Naive thymus-derived CD4-positive, alpha-beta T cell (primary cell): ENCODE measurements at regions of chr6 and their contacts with region 1.

Region 1: DNA sequence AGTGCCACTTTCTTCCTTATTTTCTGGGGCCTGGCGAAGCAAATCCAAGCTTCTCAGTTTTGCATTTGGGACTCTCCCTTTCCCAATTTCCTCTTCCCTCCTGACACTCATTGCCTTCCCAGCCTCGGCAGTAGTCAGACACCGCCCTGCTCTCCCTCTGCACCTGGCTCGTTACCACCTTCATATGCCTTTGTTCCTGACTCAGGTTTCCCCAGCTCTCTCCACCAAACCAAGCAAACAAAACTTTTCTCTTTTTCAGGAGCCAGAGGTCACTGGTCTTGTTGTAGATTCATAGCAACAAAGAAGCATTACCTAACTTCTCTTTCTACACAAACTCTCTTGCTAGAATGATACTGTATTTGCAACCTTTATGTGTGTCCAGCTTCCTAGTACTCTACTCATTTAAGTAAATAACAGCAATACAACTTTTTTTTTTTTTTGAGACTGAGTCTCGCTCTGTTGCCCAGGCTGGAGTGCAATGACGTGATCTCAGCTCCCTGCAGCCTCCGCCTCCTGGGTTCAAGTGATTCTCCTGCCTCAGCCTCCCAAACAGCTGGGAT is 9.0 kb upstream of the ZC3H12D start:
- DNase-seq: no peak
- ATAC-seq: no peak
- H3K4me3 ChIP-seq: no peak overlapping the region
- H3K4me3 Mint-ChIP-seq: peak overlapping the region in 5 of 10 donors; percentile 1 to 75 (median 48)
- H3K27ac ChIP-seq: peak overlapping the region; percentile 94
- H3K27ac Mint-ChIP-seq: peak overlapping the region; percentile 84 to 100 (median 92)
- H3K4me1 ChIP-seq: peaks cover 16 to 48% of the 10 kb centered on the region in 2 donors
- H3K4me1 Mint-ChIP-seq: peaks cover 30 to 89% (median 58%) of the 10 kb centered on the region in 7 donors
- H3K27me3 ChIP-seq: no peaks in the 10 kb centered on the region
- H3K27me3 Mint-ChIP-seq: no peaks in the 10 kb centered on the region

Region 2: DNA sequence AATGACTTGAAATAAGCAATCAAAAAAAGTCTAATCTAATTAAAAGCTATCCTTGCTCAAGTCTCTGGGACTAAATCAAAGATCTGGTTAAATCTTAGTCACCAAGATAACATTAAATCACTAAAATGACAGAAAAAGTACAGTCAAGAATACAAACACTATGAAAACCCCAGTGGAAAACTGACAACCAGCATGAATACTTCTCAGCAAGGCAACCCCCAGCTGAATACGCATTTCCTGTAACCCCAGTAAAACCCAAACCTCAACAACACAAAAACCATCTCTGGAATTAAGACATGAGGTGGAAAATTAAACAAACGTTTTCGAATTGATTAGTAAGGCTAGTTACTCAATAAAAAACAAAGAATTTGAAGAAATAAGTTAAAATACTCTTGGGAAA is 14.6 kb after region 1 on chr6:
- CTCF ChIA-PET with region 1: interaction called, 9 read pairs
- POLR2A ChIA-PET with region 1: interaction called, 25 read pairs
- intact Hi-C with region 1: loop called (anchors 1 kb)
- DNase-seq: peak in 7 of 9 donors; percentile 54 to 86 (median 73)
- ATAC-seq: peak; percentile 98
- H3K4me3 ChIP-seq: no peak overlapping the region
- H3K4me3 Mint-ChIP-seq: peak overlapping the region in 9 of 10 donors; percentile 39 to 77 (median 64)
- H3K27ac ChIP-seq: peak overlapping the region; percentile 73
- H3K27ac Mint-ChIP-seq: peak overlapping the region; percentile 86 to 97 (median 90)
- H3K4me1 ChIP-seq: peaks cover 11 to 17% of the 10 kb centered on the region in 2 donors
- H3K4me1 Mint-ChIP-seq: peaks cover 11 to 51% (median 40%) of the 10 kb centered on the region in 7 donors
- H3K27me3 ChIP-seq: no peaks in the 10 kb centered on the region
- H3K27me3 Mint-ChIP-seq: no peaks in the 10 kb centered on the region

Region 3: DNA sequence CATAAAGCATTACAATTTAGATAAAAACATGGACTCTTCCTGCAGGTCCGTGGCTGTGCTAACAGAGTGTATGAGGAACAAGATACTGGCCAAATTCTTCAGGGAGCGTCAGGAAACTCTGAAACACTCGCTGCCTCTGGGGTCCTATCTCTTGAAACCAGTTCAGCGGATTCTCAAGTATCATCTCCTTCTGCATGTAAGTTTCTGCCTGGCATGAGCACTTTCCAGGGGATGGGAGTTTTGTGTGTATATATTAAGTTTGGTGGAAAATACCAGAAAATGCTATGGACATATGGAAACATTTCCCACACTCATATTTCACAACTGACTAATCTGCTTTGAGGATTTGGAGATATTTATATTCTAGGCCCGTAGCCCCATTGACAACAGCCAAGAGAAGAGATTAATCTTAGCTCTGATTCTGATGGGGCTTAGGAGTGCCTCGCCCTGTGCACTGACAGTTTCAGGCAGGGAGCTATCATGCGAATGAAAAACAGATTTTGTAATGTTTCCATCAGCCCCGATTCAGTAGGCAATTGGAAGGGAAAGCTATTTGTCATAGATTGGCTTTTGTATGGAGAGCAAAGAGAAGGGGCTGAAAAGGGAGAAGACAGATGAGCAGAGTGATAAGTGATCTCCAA is 1307.0 kb after region 1 on chr6:
- CTCF ChIA-PET with region 1: no interaction called
- POLR2A ChIA-PET with region 1: no interaction called
- intact Hi-C with region 1: no loop called
- DNase-seq: no peak
- ATAC-seq: no peak
- H3K4me3 ChIP-seq: no peak overlapping the region
- H3K4me3 Mint-ChIP-seq: no peak overlapping the region
- H3K27ac ChIP-seq: no peak overlapping the region
- H3K27ac Mint-ChIP-seq: no peak overlapping the region
- H3K4me1 ChIP-seq: no peaks in the 10 kb centered on the region
- H3K4me1 Mint-ChIP-seq: no peaks in the 10 kb centered on the region
- H3K27me3 ChIP-seq: no peaks in the 10 kb centered on the region
- H3K27me3 Mint-ChIP-seq: peaks cover 0 to 6% (median 0%) of the 10 kb centered on the region in 5 donors